ENCODE measurements at regions of chr16 and their contacts with region 1.

Region 1: DNA sequence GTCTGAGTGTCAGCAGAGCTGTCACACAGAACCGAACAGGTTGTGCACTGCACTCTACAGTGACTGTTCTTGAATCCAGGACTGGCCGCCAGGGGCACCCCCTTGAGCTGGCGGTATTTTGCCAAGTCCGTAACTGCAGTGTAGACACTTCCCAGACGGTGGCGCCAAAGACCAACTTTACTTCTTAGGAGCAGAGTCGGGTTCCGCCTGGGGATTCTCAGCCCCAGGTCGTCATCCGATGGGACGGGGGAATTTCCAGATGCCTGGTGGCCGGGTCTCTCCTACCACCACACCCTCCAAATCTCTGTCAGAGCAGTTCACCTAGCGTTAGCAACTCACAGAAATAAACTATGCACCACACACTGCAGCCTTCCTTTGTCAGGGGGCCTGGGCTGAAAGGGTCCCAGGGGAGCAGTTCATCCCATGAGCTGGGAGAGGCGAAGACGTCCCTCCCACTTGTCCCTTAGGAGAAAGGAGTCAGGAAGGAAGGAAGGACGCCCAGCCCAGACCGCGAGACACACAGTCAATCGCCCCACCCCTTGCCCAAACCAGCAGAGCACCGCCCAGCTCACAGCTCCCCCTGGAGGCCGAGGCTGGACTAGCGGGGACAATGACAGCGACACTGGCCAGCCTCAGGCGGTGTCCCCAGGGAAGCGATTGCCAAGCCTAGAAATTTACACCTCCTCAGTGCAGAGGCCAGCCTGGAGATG is 7.4 kb upstream of the RIPOR1 start:
- DNase-seq: peak; percentile 95 to 97
- ATAC-seq: peak; percentile 91 to 97 (median 94)
- H3K4me3 ChIP-seq: peak overlapping the region in 9 of 10 donors; percentile 14 to 55 (median 52)
- H3K27ac ChIP-seq: peak overlapping the region in 9 of 10 donors; percentile 74 to 95 (median 87)
- H3K4me1 ChIP-seq: peaks cover 0 to 22% (median 12%) of the 10 kb centered on the region in 9 donors
- H3K27me3 ChIP-seq: no peaks in the 10 kb centered on the region
- CTCF ChIP-seq: peak; percentile 71 to 90 (median 77)

Region 2: GRCh38 chr16:67480833-67481560 is 40.3 kb before region 1 on chr16 and contains the start of gene ATP6V0D1:
- intact Hi-C with region 1: loop called in 1 of 10 experiments (anchors 5 kb)
- DNase-seq: peak; percentile 98 to 99
- ATAC-seq: peak; percentile 96 to 98 (median 97)
- H3K4me3 ChIP-seq: peak within 1 kb of the TSS; percentile 70 to 99 (median 90)
- H3K27ac ChIP-seq: peak within 1 kb of the TSS; percentile 16 to 96 (median 88)
- H3K4me1 ChIP-seq: peaks cover 4 to 64% (median 48%) of the 10 kb centered on the region in 9 donors
- H3K27me3 ChIP-seq: no peaks in the 10 kb centered on the region
- CTCF ChIP-seq: peak; percentile 78 to 97 (median 87)
- total RNA-seq, gene ATP6V0D1: 57.4 to 84.7 (median 67.5) TPM

Region 3: DNA sequence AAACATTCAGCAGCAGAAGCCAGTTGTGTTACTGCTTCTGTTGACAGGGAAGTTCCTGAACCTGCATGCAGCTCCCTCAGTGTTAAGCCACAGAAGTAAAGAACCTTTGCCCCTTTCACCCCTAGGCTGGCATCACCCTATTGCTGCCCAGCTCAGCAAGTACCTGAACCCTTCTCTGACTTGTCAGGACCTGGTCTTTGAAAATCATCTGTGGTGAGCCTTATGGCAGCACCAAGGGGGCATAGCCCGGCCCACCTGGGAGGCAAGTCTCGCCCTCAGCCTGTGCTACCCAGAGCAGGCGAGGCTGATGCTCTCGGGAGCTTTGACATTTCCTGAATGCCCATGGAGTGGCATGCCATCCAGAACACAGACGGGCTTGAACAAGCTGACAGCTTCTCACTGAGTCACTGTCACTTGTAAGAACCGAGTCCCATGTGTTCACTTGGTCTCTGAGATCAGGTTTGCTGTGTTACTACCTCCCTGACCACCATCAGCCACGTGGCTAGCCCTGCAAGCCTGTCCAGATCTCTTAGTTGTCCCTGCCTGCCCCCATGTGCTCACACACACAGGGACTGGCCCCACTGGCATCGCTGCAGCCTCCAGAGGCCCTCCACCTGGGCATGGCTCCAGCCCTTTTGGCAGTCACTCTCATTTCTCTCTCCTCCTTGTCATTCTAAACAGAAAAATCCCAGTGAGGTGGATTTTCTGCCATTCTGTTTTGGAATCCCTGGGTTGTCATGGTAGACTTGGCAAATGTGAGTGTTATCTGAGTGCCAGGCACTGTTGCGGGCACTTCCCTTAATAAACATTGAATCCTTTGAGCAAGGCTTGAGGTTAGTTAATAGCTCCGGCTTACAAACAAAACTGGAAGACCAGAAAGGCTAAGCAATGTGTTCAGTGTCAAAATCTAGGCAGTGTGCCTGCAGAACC is 120.8 kb after region 1 on chr16:
- intact Hi-C with region 1: loop called in 6 of 10 experiments (anchors 1 to 5 kb)
- DNase-seq: peak; percentile 78 to 81
- ATAC-seq: peak; percentile 72 to 97 (median 91)
- H3K4me3 ChIP-seq: no peak overlapping the region
- H3K27ac ChIP-seq: peak overlapping the region in 7 of 10 donors; percentile 25 to 58 (median 37)
- H3K4me1 ChIP-seq: peaks cover 0 to 37% (median 17%) of the 10 kb centered on the region in 9 donors
- H3K27me3 ChIP-seq: peaks cover 9 to 28% (median 23%) of the 10 kb centered on the region in 7 donors
- CTCF ChIP-seq: peak in 1 of 9 donors; percentile 11

Region 4: DNA sequence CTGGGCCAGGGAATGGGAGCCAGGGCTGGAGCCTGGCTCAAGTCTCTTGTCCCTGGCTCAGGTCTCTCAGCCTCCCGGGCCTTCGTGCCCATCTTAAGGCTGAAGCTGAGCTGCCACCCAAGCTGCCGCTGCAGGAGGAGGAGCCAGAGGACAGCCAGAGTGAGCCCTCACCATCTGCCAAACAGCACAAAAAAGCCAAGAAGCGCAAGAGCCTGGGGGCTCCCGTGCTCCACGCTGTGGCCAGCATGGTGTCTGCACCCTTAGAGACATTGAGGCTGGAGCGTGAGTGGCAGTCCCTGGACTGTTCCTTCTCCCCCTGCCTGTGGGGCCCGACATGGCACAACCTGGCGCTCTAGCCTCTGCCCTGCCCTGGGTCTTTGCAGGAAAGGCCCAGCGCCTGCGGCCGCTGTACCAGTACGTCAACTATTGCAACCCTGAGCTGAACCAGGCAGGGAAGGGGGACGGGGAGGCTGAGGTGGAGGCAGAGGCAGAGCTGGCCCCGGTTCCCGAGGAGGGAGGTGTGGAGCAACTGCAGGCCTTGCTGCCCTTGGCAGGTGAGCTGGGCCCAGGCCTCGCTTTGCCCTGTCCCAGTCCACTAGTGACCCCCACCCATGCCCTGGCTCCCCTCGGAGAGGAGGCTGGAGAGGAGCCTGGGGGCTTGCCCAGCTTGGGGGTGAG is 146.7 kb after region 1 on chr16:
- intact Hi-C with region 1: loop called in 8 of 10 experiments (anchors 1 to 5 kb)
- DNase-seq: peak; percentile 82 to 86
- ATAC-seq: peak; percentile 83 to 91 (median 88)
- H3K4me3 ChIP-seq: peak overlapping the region in 9 of 10 donors; percentile 58 to 92 (median 87)
- H3K27ac ChIP-seq: peak overlapping the region; percentile 81 to 98 (median 94)
- H3K4me1 ChIP-seq: peaks cover 10 to 46% (median 32%) of the 10 kb centered on the region in 9 donors
- H3K27me3 ChIP-seq: no peaks in the 10 kb centered on the region
- CTCF ChIP-seq: peak; percentile 67 to 93 (median 84)

Region 5: GRCh38 chr16:67935402-67936123 is 414.3 kb after region 1 on chr16:
- intact Hi-C with region 1: loop called in 3 of 10 experiments (anchors 10 kb)
- DNase-seq: peak; percentile 92 to 94
- ATAC-seq: peak; percentile 90 to 95 (median 92)
- H3K4me3 ChIP-seq: peak overlapping the region; percentile 70 to 96 (median 86)
- H3K27ac ChIP-seq: peak overlapping the region; percentile 70 to 98 (median 95)
- H3K4me1 ChIP-seq: peaks cover 4 to 40% (median 33%) of the 10 kb centered on the region in 9 donors
- H3K27me3 ChIP-seq: no peaks in the 10 kb centered on the region
- CTCF ChIP-seq: peak in 1 of 9 donors; percentile 5

Measured in heart right ventricle (tissue), 16 donors.